ENCODE measurements at regions of chr4 and their contacts with region 1.

Region 1: DNA sequence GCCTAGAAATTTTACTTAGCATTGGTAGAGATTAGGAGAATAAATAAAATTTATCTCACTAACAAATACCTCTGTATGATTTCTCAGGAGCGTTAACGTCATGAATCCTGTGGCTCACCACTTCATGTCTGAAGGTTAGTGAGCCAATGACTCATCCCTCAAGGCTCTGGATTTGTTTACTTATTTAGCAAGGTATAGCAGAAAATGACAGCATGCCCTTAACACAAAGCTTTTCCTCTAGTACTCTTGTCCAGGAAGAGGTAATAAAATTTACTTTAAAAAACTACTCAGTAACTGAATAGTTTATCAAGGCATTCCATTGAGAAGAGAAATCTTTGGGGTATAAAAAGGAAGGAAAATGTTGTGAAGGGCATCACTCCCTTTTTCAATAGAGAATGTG is 823.8 kb downstream of the CCSER1 start:
- DNase-seq: no peak
- ATAC-seq: no peak
- H3K4me3 ChIP-seq: no peak overlapping the region
- H3K27ac ChIP-seq: no peak overlapping the region
- H3K4me1 ChIP-seq: no peaks in the 10 kb centered on the region
- H3K27me3 ChIP-seq: no peaks in the 10 kb centered on the region
- CTCF ChIP-seq: no peak
- EP300 ChIP-seq: no peak
- POLR2A ChIP-seq: no peak
- RAD21 ChIP-seq: no peak

Region 2: GRCh38 chr4:90970021-90970420 is 19.0 kb after region 1 on chr4:
- CTCF ChIA-PET with region 1: no interaction called
- POLR2A ChIA-PET with region 1: no interaction called
- in situ Hi-C with region 1: no loop called
- intact Hi-C with region 1: no loop called
- DNase-seq: no peak
- ATAC-seq: no peak
- H3K4me3 ChIP-seq: no peak overlapping the region
- H3K27ac ChIP-seq: no peak overlapping the region
- H3K4me1 ChIP-seq: no peaks in the 10 kb centered on the region
- H3K27me3 ChIP-seq: no peaks in the 10 kb centered on the region
- CTCF ChIP-seq: no peak
- EP300 ChIP-seq: no peak
- POLR2A ChIP-seq: no peak
- RAD21 ChIP-seq: no peak

Region 3: DNA sequence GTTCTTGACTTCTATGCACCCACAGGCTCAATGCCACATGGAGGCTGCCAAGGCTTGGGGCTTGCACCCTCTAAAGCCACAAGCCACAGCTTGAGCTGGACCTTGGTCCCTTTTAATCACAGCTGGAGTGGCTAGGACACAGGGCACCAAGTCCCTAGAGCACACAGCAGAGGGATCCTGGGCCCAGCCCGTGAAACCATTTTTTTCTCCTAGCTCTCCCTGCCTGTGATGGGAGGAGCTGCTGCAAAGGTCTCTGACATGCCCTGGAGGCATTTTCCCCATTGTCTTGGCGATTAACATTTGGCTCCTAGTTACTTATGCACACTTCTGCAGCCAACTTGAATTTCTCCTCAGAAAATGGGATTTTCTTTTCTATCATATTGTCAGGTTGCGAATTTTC is 1763.6 kb after region 1 on chr4:
- CTCF ChIA-PET with region 1: no interaction called
- POLR2A ChIA-PET with region 1: no interaction called
- in situ Hi-C with region 1: no loop called
- intact Hi-C with region 1: loop called (anchors 10 kb)
- DNase-seq: no peak
- ATAC-seq: no peak
- H3K4me3 ChIP-seq: no peak overlapping the region
- H3K27ac ChIP-seq: no peak overlapping the region
- H3K4me1 ChIP-seq: no peaks in the 10 kb centered on the region
- H3K27me3 ChIP-seq: no peaks in the 10 kb centered on the region
- CTCF ChIP-seq: no peak
- EP300 ChIP-seq: no peak
- POLR2A ChIP-seq: no peak
- RAD21 ChIP-seq: no peak

Measured in K562 (cell line).